PC-3 (cell line): ENCODE measurements at regions of chr9 and their contacts with region 1.

Region 1: GRCh38 chr9:114504341-114505186 is 709 bp downstream of the WHRN start:
- DNase-seq: peak; percentile 58
- ATAC-seq: peak; percentile 62
- H3K4me3 ChIP-seq: peak overlapping the region; percentile 90
- H3K27ac ChIP-seq: peak overlapping the region; percentile 17; the same call in 1 of the 2 replicates
- H3K4me1 ChIP-seq: peaks cover 22% of the 10 kb centered on the region
- H3K27me3 ChIP-seq: no peaks in the 10 kb centered on the region
- CTCF ChIP-seq: peak; percentile 70

Region 2: GRCh38 chr9:114434878-114435311 is 69.7 kb before region 1 on chr9:
- CTCF ChIA-PET with region 1: no interaction called
- POLR2A ChIA-PET with region 1: no interaction called
- intact Hi-C with region 1: loop called (anchors 2 kb)
- DNase-seq: peak; percentile 49
- ATAC-seq: peak; percentile 60; the same call in 1 of the 2 replicates
- H3K4me3 ChIP-seq: no peak overlapping the region
- H3K27ac ChIP-seq: no peak overlapping the region
- H3K4me1 ChIP-seq: peaks cover 4% of the 10 kb centered on the region; the same call in 1 of the 2 replicates
- H3K27me3 ChIP-seq: no peaks in the 10 kb centered on the region
- CTCF ChIP-seq: peak; percentile 67

Region 3: DNA sequence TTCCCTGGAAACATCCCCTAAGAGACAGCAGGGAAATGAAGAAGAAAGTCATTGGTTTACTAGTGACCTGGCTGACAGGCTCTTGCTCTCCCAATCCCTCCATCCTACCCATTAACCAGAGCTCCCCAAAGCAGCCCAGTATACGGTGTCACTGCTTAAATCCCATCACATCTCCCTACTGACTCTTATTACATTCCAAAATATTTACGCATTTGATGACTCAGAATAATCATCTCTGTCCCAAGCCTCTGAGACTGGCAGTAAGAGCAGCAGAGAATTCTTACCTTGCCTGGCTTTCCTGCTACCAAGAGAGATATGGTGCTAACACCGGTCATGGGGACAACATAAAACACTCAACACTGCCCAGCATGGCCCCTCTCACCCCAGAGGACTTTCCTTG is 20.9 kb after region 1 on chr9:
- CTCF ChIA-PET with region 1: no interaction called
- POLR2A ChIA-PET with region 1: interaction called, 20 read pairs
- intact Hi-C with region 1: no loop called
- DNase-seq: peak; percentile 83
- ATAC-seq: peak; percentile 100
- H3K4me3 ChIP-seq: no peak overlapping the region
- H3K27ac ChIP-seq: no peak overlapping the region
- H3K4me1 ChIP-seq: peaks cover 16% of the 10 kb centered on the region
- H3K27me3 ChIP-seq: no peaks in the 10 kb centered on the region
- CTCF ChIP-seq: no peak

Region 4: DNA sequence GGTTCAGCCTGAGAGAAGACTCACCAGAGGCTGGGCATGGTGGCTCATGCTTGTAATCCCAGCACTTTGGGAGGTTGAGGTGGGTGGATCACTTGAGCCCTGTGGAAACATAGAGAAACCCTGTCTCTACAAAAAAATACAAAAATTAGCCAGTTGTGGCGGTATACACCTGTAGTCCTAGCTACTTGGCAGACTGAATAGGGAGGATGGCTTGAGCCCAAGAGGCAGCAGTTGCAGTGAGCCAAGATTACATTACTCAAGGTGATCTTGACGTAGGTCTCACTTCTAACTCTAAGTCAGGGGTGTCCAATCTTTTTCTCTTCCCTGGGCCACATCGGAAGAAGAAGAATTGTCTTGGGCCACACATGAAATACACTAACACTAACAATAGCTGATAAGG is 66.8 kb after region 1 on chr9:
- CTCF ChIA-PET with region 1: no interaction called
- POLR2A ChIA-PET with region 1: no interaction called
- intact Hi-C with region 1: no loop called
- DNase-seq: no peak
- ATAC-seq: no peak
- H3K4me3 ChIP-seq: no peak overlapping the region
- H3K27ac ChIP-seq: no peak overlapping the region
- H3K4me1 ChIP-seq: no peaks in the 10 kb centered on the region
- H3K27me3 ChIP-seq: no peaks in the 10 kb centered on the region
- CTCF ChIP-seq: no peak

Region 5: GRCh38 chr9:114587385-114588202 is 83.0 kb after region 1 on chr9 and contains the start of gene ATP6V1G1:
- CTCF ChIA-PET with region 1: interaction called, 6 read pairs
- POLR2A ChIA-PET with region 1: interaction called, 14 read pairs
- intact Hi-C with region 1: loop called (anchors 1 kb)
- DNase-seq: peak; percentile 97
- ATAC-seq: peak; percentile 93
- H3K4me3 ChIP-seq: peak within 1 kb of the TSS; percentile 94
- H3K27ac ChIP-seq: peak within 1 kb of the TSS; percentile 74
- H3K4me1 ChIP-seq: peaks cover 20% of the 10 kb centered on the region
- H3K27me3 ChIP-seq: no peaks in the 10 kb centered on the region
- CTCF ChIP-seq: no peak
- total RNA-seq, gene ATP6V1G1: 126 and 162 TPM in 2 replicates

Region 6: DNA sequence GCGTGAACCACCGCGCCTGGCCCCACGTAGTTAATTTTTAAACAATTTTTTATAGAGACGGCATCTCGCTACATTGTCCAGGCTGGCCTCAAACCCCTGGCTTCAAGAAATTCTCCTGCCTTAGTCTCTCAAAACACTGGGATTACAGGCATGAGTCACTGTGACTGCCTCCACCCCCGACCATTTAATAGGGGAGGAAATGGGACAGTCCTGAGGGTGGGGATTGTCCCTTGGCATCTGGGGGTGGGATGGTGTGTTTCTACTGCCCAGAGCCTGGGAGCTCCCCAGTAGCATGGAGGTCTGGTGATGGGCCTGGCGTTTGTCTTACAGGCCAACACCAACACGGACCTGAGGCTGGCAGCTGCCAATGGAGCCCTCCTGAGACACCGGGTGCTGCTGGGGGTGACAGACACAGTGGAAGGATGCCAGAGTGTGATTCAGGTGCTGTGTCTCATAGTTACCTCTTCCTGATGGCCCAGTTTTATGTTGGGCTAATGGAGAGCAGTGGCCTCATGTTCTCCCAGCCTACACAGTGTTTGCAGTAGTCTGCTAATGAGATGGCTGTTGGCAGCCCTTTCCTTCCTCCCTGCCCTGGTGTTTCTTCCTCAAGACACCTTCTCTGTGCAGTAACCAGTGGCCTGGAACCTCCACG is 129.0 kb after region 1 on chr9:
- CTCF ChIA-PET with region 1: no interaction called
- POLR2A ChIA-PET with region 1: no interaction called
- intact Hi-C with region 1: no loop called
- DNase-seq: peak; percentile 70
- ATAC-seq: peak; percentile 93
- H3K4me3 ChIP-seq: no peak overlapping the region
- H3K27ac ChIP-seq: peak overlapping the region; percentile 55
- H3K4me1 ChIP-seq: peaks cover 10% of the 10 kb centered on the region; the same call in 1 of the 2 replicates
- H3K27me3 ChIP-seq: no peaks in the 10 kb centered on the region
- CTCF ChIP-seq: no peak

Region 7: DNA sequence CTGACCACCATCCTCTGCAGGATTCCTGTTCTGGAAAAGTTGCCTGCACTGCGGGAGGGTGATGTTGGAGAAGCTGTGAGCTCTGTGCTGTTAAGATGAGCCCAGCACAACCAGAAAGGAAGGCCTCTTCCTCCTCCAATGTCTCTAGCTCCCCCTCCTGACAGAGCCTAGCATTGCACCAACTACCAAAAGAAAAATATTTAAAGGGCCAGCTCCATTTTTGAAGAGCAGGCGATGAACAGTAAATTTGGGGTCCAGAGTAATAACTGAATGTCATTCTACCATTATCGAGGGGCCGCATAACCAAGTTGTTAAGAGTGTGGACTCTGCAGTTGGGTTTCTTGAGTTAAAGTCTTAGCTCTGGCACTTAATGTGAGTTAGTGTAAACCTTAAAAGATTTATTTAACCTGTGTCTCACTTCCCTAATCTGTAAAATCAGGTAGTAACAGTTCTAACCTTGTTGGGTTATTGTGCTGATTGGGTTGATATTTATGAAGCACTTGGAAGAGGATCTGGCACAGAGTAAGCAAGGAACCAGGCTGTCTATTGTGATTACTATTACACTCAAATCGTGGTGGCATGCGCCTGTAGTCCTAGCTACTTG is 149.1 kb after region 1 on chr9:
- CTCF ChIA-PET with region 1: interaction called, 14 read pairs
- POLR2A ChIA-PET with region 1: no interaction called
- intact Hi-C with region 1: loop called (anchors 5 kb)
- DNase-seq: peak; percentile 83
- ATAC-seq: peak; percentile 85
- H3K4me3 ChIP-seq: no peak overlapping the region
- H3K27ac ChIP-seq: no peak overlapping the region
- H3K4me1 ChIP-seq: no peaks in the 10 kb centered on the region
- H3K27me3 ChIP-seq: no peaks in the 10 kb centered on the region
- CTCF ChIP-seq: peak; percentile 89